ENCODE measurements at regions of chr6 and their contacts with region 1.

Region 1: GRCh38 chr6:85975957-85976356 is 333.3 kb upstream of the SYNCRIP start:
- DNase-seq: no peak
- H3K4me3 ChIP-seq: no peak overlapping the region
- H3K27ac ChIP-seq: no peak overlapping the region
- H3K4me1 ChIP-seq: no peaks in the 10 kb centered on the region
- H3K27me3 ChIP-seq: no peaks in the 10 kb centered on the region
- CTCF ChIP-seq: no peak

Region 2: GRCh38 chr6:85394853-85395538 is 581.0 kb before region 1 on chr6:
- CTCF ChIA-PET with region 1: no interaction called
- POLR2A ChIA-PET with region 1: no interaction called
- intact Hi-C with region 1: no loop called
- DNase-seq: no peak
- H3K4me3 ChIP-seq: no peak overlapping the region
- H3K27ac ChIP-seq: no peak overlapping the region
- H3K4me1 ChIP-seq: peaks cover 11% of the 10 kb centered on the region; the same call in 1 of the 2 replicates
- H3K27me3 ChIP-seq: no peaks in the 10 kb centered on the region
- CTCF ChIP-seq: no peak

Region 3: GRCh38 chr6:85678602-85679444 is 297.1 kb before region 1 on chr6:
- CTCF ChIA-PET with region 1: no interaction called
- POLR2A ChIA-PET with region 1: interaction called, 10 read pairs
- intact Hi-C with region 1: no loop called
- DNase-seq: peak; percentile 86 to 96
- H3K4me3 ChIP-seq: peak overlapping the region; percentile 95
- H3K27ac ChIP-seq: peak overlapping the region; percentile 77
- H3K4me1 ChIP-seq: peaks cover 17% of the 10 kb centered on the region
- H3K27me3 ChIP-seq: no peaks in the 10 kb centered on the region
- CTCF ChIP-seq: no peak

Region 4: DNA sequence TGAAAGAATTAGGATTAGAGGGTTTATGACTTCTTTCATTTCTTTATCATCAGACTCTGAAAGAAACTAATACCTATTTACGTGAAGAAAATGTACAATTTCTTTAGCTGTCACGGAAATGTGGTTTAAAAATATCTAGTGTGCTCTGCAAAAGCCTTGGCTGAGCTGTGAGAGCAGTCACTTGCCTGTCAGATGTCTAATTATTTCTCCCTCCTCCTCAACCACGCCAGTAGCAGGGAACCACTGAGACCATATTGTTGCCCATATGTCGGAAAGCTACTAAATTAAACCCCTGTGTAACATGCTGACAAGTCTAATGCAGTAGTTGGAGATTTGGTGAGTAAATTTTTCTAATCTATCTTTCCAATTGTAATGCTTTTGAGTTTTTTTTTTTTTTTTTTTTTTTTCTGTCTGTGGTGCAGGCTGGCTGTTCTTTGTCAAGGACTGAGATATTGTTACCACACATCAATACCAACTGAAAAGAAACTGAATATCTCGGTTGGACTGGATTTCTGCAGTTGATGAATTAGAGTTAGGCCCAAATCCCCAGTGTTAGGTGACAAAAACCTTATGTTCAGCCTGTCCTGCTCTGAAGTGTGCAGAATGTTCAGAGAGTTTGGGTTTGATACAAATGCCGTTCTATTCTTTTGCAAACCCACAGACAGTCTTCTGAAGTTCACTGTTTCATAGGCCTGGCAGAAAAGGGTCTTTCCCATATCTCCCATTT is 30.3 kb before region 1 on chr6:
- CTCF ChIA-PET with region 1: no interaction called
- POLR2A ChIA-PET with region 1: no interaction called
- intact Hi-C with region 1: no loop called
- DNase-seq: no peak
- H3K4me3 ChIP-seq: no peak overlapping the region
- H3K27ac ChIP-seq: no peak overlapping the region
- H3K4me1 ChIP-seq: no peaks in the 10 kb centered on the region
- H3K27me3 ChIP-seq: no peaks in the 10 kb centered on the region
- CTCF ChIP-seq: no peak